Heart right ventricle (tissue), 16 donors: ENCODE measurements at regions of chr11 and their contacts with region 1.

Region 1: GRCh38 chr11:61899146-61899841 is 7.9 kb upstream of the FADS3 start:
- DNase-seq: peak; percentile 84 to 88
- ATAC-seq: peak; percentile 67 to 87 (median 82)
- H3K4me3 ChIP-seq: no peak overlapping the region
- H3K27ac ChIP-seq: peak overlapping the region in 6 of 10 donors; percentile 2 to 61 (median 42)
- H3K4me1 ChIP-seq: peaks cover 0 to 22% (median 10%) of the 10 kb centered on the region in 9 donors
- H3K27me3 ChIP-seq: no peaks in the 10 kb centered on the region
- CTCF ChIP-seq: peak; percentile 98 to 100 (median 100)

Region 2: GRCh38 chr11:62081378-62082291 is 182.3 kb after region 1 on chr11:
- intact Hi-C with region 1: loop called (anchors 1 to 5 kb)
- DNase-seq: peak; percentile 74 to 79
- ATAC-seq: peak; percentile 59 to 92 (median 86)
- H3K4me3 ChIP-seq: no peak overlapping the region
- H3K27ac ChIP-seq: peak overlapping the region in 1 of 10 donors; percentile 16
- H3K4me1 ChIP-seq: peaks cover 0 to 15% (median 0%) of the 10 kb centered on the region in 9 donors
- H3K27me3 ChIP-seq: no peaks in the 10 kb centered on the region
- CTCF ChIP-seq: peak; percentile 86 to 98 (median 94)

Region 3: GRCh38 chr11:62132188-62132587 is 232.9 kb after region 1 on chr11:
- intact Hi-C with region 1: no loop called
- DNase-seq: no peak
- ATAC-seq: peak in 1 of 8 donors; percentile 48
- H3K4me3 ChIP-seq: no peak overlapping the region
- H3K27ac ChIP-seq: no peak overlapping the region
- H3K4me1 ChIP-seq: peaks cover 0 to 8% (median 0%) of the 10 kb centered on the region in 9 donors
- H3K27me3 ChIP-seq: no peaks in the 10 kb centered on the region
- CTCF ChIP-seq: no peak